ENCODE measurements at regions of chr19 and their contacts with region 1.

Region 1: GRCh38 chr19:48993175-48994034 is at the starts of genes GYS1 and RUVBL2:
- DNase-seq: peak; percentile 100
- ATAC-seq: peak; percentile 95
- H3K4me3 Mint-ChIP-seq: peak within 1 kb of the TSS; percentile 100
- H3K27ac Mint-ChIP-seq: peak within 1 kb of the TSS; percentile 97
- H3K4me1 Mint-ChIP-seq: peaks cover 41% of the 10 kb centered on the region
- H3K27me3 Mint-ChIP-seq: no peaks in the 10 kb centered on the region
- total RNA-seq, gene GYS1: 80.2 to 102 TPM
- total RNA-seq, gene RUVBL2: 155 to 178 TPM

Region 2: GRCh38 chr19:48321622-48322591 is 671.5 kb before region 1 on chr19:
- CTCF ChIA-PET with region 1: interaction called, 3 read pairs
- POLR2A ChIA-PET with region 1: no interaction called
- intact Hi-C with region 1: loop called in 1 of 2 experiments (anchors 10 kb)
- DNase-seq: peak; percentile 99
- ATAC-seq: peak; percentile 68
- H3K4me3 Mint-ChIP-seq: peak overlapping the region; percentile 82
- H3K27ac Mint-ChIP-seq: peak overlapping the region; percentile 97
- H3K4me1 Mint-ChIP-seq: peaks cover 56% of the 10 kb centered on the region
- H3K27me3 Mint-ChIP-seq: no peaks in the 10 kb centered on the region

Region 3: DNA sequence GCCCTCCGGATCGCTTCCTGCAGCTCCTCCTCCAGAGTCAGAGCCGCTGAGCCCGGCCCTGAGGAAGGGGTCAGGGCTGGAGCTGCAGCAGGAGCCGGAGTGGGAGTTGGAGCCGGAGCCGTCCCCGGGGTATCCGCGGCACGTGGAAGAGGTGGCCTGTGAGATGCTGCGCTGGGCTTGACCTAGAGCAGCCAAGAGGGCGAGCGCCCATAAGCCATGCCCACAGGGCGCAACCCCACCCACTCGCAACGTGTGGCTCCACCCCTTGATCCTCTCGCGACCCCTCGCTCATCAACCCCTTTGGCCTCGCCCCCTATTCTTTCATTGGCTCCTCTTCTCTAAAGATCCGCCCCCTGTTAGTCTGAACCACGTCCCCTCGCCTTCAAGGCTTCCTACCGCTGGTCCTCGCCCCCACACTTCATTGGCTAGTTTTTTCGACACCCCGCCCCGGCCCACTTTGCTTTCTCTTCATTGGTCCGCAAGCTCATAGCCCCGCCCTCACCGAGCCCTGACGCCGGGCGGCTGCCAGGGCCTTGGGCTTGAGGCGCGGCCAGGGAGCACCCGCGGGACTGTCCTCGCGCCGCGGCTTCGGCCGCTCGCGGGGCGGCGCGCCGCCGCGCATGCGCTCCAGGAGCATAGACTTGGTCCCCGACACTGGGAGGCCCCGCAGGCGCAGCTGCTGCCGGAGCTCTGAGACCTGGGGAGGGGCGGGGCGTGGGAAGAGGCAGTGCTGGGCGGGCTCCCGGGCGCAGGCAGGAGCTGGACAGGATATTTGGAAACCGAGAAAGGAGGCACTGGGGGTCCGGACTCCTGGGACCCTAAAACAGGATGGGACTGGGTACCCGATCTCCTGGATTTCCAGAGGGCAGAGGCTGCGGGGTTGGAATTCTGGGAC is 279.3 kb before region 1 on chr19:
- CTCF ChIA-PET with region 1: no interaction called
- POLR2A ChIA-PET with region 1: interaction called, 4 read pairs
- intact Hi-C with region 1: loop called in 1 of 2 experiments (anchors 1 kb)
- DNase-seq: peak; percentile 99
- ATAC-seq: peak; percentile 93
- H3K4me3 Mint-ChIP-seq: peak overlapping the region; percentile 83
- H3K27ac Mint-ChIP-seq: peak overlapping the region; percentile 84
- H3K4me1 Mint-ChIP-seq: peaks cover 14% of the 10 kb centered on the region
- H3K27me3 Mint-ChIP-seq: no peaks in the 10 kb centered on the region

Region 4: GRCh38 chr19:48899781-48900476 is 93.5 kb before region 1 on chr19 and contains the start of gene NUCB1:
- CTCF ChIA-PET with region 1: interaction called, 5 read pairs
- POLR2A ChIA-PET with region 1: interaction called, 7 read pairs
- intact Hi-C with region 1: loop called in 1 of 2 experiments (anchors 1 kb)
- DNase-seq: peak; percentile 100
- ATAC-seq: peak; percentile 95
- H3K4me3 Mint-ChIP-seq: peak within 1 kb of the TSS; percentile 99
- H3K27ac Mint-ChIP-seq: peak within 1 kb of the TSS; percentile 98
- H3K4me1 Mint-ChIP-seq: peaks cover 34% of the 10 kb centered on the region
- H3K27me3 Mint-ChIP-seq: peaks cover 5% of the 10 kb centered on the region
- total RNA-seq, gene NUCB1: 115 to 118 TPM

Region 5: DNA sequence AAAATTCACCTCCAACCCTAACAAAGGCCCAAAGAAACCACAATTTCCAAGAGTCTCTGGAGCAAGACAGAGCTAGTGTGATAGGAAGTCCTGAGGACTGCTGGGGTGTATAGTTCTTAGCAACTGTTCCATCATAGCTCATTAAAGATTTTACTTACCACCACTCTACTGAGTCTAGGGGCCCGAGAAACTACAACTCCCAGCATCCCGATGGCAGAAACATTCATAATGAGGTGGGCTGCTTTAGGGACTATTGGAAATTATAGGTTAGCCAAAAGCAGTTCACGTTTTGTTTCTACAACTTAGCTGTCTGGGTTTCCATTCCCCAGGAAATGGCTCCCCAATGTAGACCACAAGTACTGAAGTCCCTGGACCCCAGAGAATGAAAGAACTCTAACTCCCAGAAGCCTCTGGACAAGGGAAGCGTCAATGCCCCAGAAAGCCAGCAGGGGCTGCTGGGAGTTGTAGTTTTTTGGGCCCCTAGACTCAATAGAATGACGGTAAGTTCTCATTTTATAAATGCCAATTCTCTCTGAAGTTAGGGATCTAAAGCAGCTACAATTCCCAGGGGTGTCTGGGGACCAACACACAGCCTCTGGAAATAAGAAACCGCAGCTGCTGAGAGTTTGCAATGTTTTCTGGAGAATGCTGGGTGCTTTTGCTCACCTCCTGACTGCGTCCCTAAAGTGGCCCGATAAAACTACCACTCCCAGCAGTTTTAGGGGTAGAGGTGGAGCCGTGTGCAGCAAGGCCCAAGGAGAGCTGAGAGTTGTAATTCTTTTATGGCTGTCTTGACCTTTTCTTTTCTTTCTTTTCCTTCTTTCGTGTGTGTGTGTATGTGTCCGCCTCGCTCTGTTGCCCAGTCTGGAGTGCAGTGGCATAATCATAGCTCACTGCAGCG is 17.2 kb before region 1 on chr19:
- CTCF ChIA-PET with region 1: interaction called, 45 read pairs
- POLR2A ChIA-PET with region 1: no interaction called
- intact Hi-C with region 1: no loop called
- DNase-seq: peak; percentile 68
- ATAC-seq: peak; percentile 77
- H3K4me3 Mint-ChIP-seq: no peak overlapping the region
- H3K27ac Mint-ChIP-seq: no peak overlapping the region
- H3K4me1 Mint-ChIP-seq: peaks cover 6% of the 10 kb centered on the region
- H3K27me3 Mint-ChIP-seq: no peaks in the 10 kb centered on the region

Region 6: DNA sequence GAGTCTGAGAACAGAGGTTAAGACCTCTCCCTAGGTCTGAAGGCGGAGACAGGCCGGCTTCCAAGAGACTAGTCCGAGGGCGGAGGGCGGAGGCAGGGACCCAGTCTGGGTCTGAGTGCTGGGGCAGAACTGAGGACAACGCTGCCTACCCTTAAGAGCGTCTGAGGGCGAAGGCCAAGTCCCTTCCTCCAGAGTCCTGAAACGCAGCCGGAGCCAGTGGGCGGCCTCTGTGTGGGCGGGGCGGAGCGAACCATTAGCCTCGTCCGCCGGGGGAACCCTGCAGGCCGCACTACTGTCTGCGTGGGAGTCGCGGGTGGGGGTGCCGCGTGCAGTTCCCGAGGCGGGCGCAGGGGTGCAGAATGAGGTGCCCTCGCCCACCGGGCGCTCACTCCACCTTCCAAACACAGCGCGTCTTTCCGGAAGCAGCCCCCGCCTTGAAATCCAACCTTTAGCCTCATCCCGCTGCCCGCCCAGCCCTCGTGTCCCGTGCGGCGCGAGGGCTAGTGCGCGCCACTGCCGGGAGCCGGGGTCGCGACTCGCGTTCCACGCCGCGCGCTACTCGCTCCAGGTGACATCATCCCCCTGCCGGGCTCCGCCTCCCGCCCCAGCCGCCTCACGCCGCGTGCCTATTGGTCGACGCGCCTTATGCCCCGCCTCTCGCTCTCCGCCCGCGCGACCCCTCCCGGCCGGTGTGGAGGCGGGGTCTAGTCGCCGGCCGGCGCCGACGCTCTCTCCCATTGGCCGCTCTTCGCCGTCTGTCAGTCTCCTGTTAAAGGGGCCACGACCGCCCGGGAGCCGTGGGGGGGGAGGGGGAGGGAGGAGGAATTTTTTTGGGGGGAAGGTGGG is 125.4 kb after region 1 on chr19 and contains the start of gene C19orf73:
- CTCF ChIA-PET with region 1: interaction called, 8 read pairs
- POLR2A ChIA-PET with region 1: no interaction called
- intact Hi-C with region 1: loop called in 1 of 2 experiments (anchors 2 kb)
- DNase-seq: peak; percentile 98
- ATAC-seq: peak; percentile 85
- H3K4me3 Mint-ChIP-seq: peak within 1 kb of the TSS; percentile 80
- H3K27ac Mint-ChIP-seq: peak within 1 kb of the TSS; percentile 84
- H3K4me1 Mint-ChIP-seq: peaks cover 28% of the 10 kb centered on the region
- H3K27me3 Mint-ChIP-seq: peaks cover 8% of the 10 kb centered on the region
- total RNA-seq, gene C19orf73: 1.7 to 2.0 TPM

Region 7: GRCh38 chr19:49255674-49256073 is 262.3 kb after region 1 on chr19:
- CTCF ChIA-PET with region 1: no interaction called
- POLR2A ChIA-PET with region 1: no interaction called
- intact Hi-C with region 1: no loop called
- DNase-seq: no peak
- ATAC-seq: no peak
- H3K4me3 Mint-ChIP-seq: no peak overlapping the region
- H3K27ac Mint-ChIP-seq: no peak overlapping the region
- H3K4me1 Mint-ChIP-seq: no peaks in the 10 kb centered on the region
- H3K27me3 Mint-ChIP-seq: peaks cover 34% of the 10 kb centered on the region

Region 8: GRCh38 chr19:49287141-49287770 is 293.9 kb after region 1 on chr19:
- CTCF ChIA-PET with region 1: no interaction called
- POLR2A ChIA-PET with region 1: no interaction called
- intact Hi-C with region 1: no loop called
- DNase-seq: no peak
- ATAC-seq: no peak
- H3K4me3 Mint-ChIP-seq: no peak overlapping the region
- H3K27ac Mint-ChIP-seq: no peak overlapping the region
- H3K4me1 Mint-ChIP-seq: no peaks in the 10 kb centered on the region
- H3K27me3 Mint-ChIP-seq: no peaks in the 10 kb centered on the region

Region 9: DNA sequence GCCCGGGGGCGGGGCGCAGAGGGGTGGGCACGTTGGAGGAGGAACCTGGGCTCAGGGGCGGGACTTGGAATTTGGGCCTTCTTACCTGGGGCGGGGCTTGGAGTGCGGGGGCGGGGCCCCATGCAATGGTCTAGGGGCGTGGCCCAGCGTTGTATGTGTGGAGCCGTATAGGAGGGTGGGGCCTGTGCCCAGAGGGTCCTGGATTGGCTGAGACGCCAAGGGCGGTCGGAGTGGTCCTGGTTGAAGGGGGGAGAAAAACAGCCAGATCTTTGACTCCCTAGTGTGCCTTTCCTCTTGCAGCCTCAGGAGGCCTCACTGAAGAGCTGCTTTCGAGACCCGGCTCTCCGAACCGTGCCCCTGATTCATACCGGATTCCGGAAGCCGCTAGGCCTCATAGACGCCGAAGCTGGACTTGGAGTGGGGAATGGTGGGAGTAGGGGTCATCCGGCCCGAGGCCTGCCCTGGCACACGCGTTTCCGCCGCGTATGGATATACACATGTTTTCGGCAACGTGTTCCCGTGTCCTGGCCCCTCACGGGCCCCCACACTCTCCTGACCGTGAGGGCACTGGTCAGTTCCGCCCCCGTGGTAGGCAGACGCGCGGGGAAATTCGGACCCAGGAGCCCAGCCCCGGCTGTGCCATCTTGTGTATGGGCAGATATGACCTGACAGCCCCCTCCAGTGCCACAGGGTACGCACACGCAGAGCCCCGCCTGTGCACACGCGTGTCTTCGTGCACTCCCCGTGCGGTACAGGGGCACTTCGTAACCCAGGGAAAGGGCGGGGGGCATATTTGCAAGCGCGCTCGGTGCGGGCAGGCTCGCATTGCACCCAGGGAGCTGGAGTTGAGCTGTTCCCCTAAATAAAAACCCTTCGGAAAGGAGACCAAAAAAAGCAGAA is 596.9 kb after region 1 on chr19:
- CTCF ChIA-PET with region 1: no interaction called
- POLR2A ChIA-PET with region 1: no interaction called
- intact Hi-C with region 1: loop called in 1 of 2 experiments (anchors 5 kb)
- DNase-seq: peak; percentile 98
- ATAC-seq: peak; percentile 80
- H3K4me3 Mint-ChIP-seq: peak overlapping the region; percentile 79
- H3K27ac Mint-ChIP-seq: peak overlapping the region; percentile 84
- H3K4me1 Mint-ChIP-seq: peaks cover 28% of the 10 kb centered on the region
- H3K27me3 Mint-ChIP-seq: no peaks in the 10 kb centered on the region